ENCODE measurements at regions of chr14 and their contacts with region 1.

Region 1: GRCh38 chr14:68795597-68796417 is 2.9 kb upstream of the ZFP36L1 start:
- DNase-seq: peak; percentile 83
- ATAC-seq: peak; percentile 41
- H3K4me3 Mint-ChIP-seq: peak overlapping the region; percentile 100
- H3K27ac Mint-ChIP-seq: peak overlapping the region; percentile 99
- H3K4me1 Mint-ChIP-seq: peaks cover 48% of the 10 kb centered on the region
- H3K27me3 Mint-ChIP-seq: no peaks in the 10 kb centered on the region
- CTCF ChIP-seq: no peak

Region 2: GRCh38 chr14:68261092-68261842 is 534.5 kb before region 1 on chr14:
- CTCF ChIA-PET with region 1: no interaction called
- POLR2A ChIA-PET with region 1: interaction called, 413 read pairs
- intact Hi-C with region 1: no loop called
- DNase-seq: no peak
- ATAC-seq: peak; percentile 56
- H3K4me3 Mint-ChIP-seq: peak overlapping the region; percentile 51
- H3K27ac Mint-ChIP-seq: peak overlapping the region; percentile 96
- H3K4me1 Mint-ChIP-seq: peaks cover 81% of the 10 kb centered on the region
- H3K27me3 Mint-ChIP-seq: no peaks in the 10 kb centered on the region
- CTCF ChIP-seq: no peak

Region 3: GRCh38 chr14:68322940-68323620 is 472.7 kb before region 1 on chr14:
- CTCF ChIA-PET with region 1: no interaction called
- POLR2A ChIA-PET with region 1: interaction called, 10 read pairs
- intact Hi-C with region 1: no loop called
- DNase-seq: no peak
- ATAC-seq: no peak
- H3K4me3 Mint-ChIP-seq: no peak overlapping the region
- H3K27ac Mint-ChIP-seq: no peak overlapping the region
- H3K4me1 Mint-ChIP-seq: peaks cover 74% of the 10 kb centered on the region
- H3K27me3 Mint-ChIP-seq: no peaks in the 10 kb centered on the region
- CTCF ChIP-seq: no peak

Region 4: GRCh38 chr14:68442828-68443629 is 352.8 kb before region 1 on chr14:
- CTCF ChIA-PET with region 1: no interaction called
- POLR2A ChIA-PET with region 1: interaction called, 12 read pairs
- intact Hi-C with region 1: no loop called
- DNase-seq: no peak
- ATAC-seq: no peak
- H3K4me3 Mint-ChIP-seq: no peak overlapping the region
- H3K27ac Mint-ChIP-seq: no peak overlapping the region
- H3K4me1 Mint-ChIP-seq: peaks cover 18% of the 10 kb centered on the region
- H3K27me3 Mint-ChIP-seq: no peaks in the 10 kb centered on the region
- CTCF ChIP-seq: no peak

Region 5: GRCh38 chr14:68513838-68514620 is 281.8 kb before region 1 on chr14:
- CTCF ChIA-PET with region 1: no interaction called
- POLR2A ChIA-PET with region 1: interaction called, 585 read pairs
- intact Hi-C with region 1: no loop called
- DNase-seq: no peak
- ATAC-seq: peak; percentile 84
- H3K4me3 Mint-ChIP-seq: peak overlapping the region; percentile 64
- H3K27ac Mint-ChIP-seq: peak overlapping the region; percentile 94
- H3K4me1 Mint-ChIP-seq: peaks cover 66% of the 10 kb centered on the region
- H3K27me3 Mint-ChIP-seq: no peaks in the 10 kb centered on the region
- CTCF ChIP-seq: no peak

Region 6: GRCh38 chr14:68718023-68718995 is 77.5 kb before region 1 on chr14:
- CTCF ChIA-PET with region 1: no interaction called
- POLR2A ChIA-PET with region 1: interaction called, 16 read pairs
- intact Hi-C with region 1: no loop called
- DNase-seq: no peak
- ATAC-seq: peak; percentile 69
- H3K4me3 Mint-ChIP-seq: no peak overlapping the region
- H3K27ac Mint-ChIP-seq: no peak overlapping the region
- H3K4me1 Mint-ChIP-seq: peaks cover 19% of the 10 kb centered on the region
- H3K27me3 Mint-ChIP-seq: no peaks in the 10 kb centered on the region
- CTCF ChIP-seq: no peak

Region 7: GRCh38 chr14:68899033-68899603 is 103.3 kb after region 1 on chr14:
- CTCF ChIA-PET with region 1: no interaction called
- POLR2A ChIA-PET with region 1: no interaction called
- intact Hi-C with region 1: no loop called
- DNase-seq: no peak
- ATAC-seq: no peak
- H3K4me3 Mint-ChIP-seq: no peak overlapping the region
- H3K27ac Mint-ChIP-seq: no peak overlapping the region
- H3K4me1 Mint-ChIP-seq: no peaks in the 10 kb centered on the region
- H3K27me3 Mint-ChIP-seq: peaks cover 34% of the 10 kb centered on the region
- CTCF ChIP-seq: no peak

Region 8: GRCh38 chr14:69325646-69326265 is 529.9 kb after region 1 on chr14:
- CTCF ChIA-PET with region 1: no interaction called
- POLR2A ChIA-PET with region 1: no interaction called
- intact Hi-C with region 1: no loop called
- DNase-seq: no peak
- ATAC-seq: no peak
- H3K4me3 Mint-ChIP-seq: no peak overlapping the region
- H3K27ac Mint-ChIP-seq: no peak overlapping the region
- H3K4me1 Mint-ChIP-seq: no peaks in the 10 kb centered on the region
- H3K27me3 Mint-ChIP-seq: peaks cover 6% of the 10 kb centered on the region
- CTCF ChIP-seq: no peak

Measured in activated B cell treated with CpG ODN at 0.5 μM for 24 hours (primary cell).